Activated B cell treated with CpG ODN at 0.5 μM for 24 hours (primary cell): ENCODE measurements at regions of chr6 and their contacts with region 1.

Region 1: GRCh38 chr6:41683510-41684310 is 45.4 kb downstream of the MDFI start:
- DNase-seq: peak; percentile 78
- ATAC-seq: peak; percentile 82
- H3K4me3 Mint-ChIP-seq: peak overlapping the region; percentile 78
- H3K27ac Mint-ChIP-seq: peak overlapping the region; percentile 83
- H3K4me1 Mint-ChIP-seq: peaks cover 20% of the 10 kb centered on the region
- H3K27me3 Mint-ChIP-seq: no peaks in the 10 kb centered on the region
- CTCF ChIP-seq: peak; percentile 54

Region 2: GRCh38 chr6:39962831-39963230 is 1720.9 kb before region 1 on chr6:
- CTCF ChIA-PET with region 1: no interaction called
- POLR2A ChIA-PET with region 1: no interaction called
- intact Hi-C with region 1: no loop called
- DNase-seq: no peak
- ATAC-seq: no peak
- H3K4me3 Mint-ChIP-seq: no peak overlapping the region
- H3K27ac Mint-ChIP-seq: no peak overlapping the region
- H3K4me1 Mint-ChIP-seq: no peaks in the 10 kb centered on the region
- H3K27me3 Mint-ChIP-seq: peaks cover 8% of the 10 kb centered on the region
- CTCF ChIP-seq: no peak

Region 3: GRCh38 chr6:41008011-41008410 is 675.7 kb before region 1 on chr6:
- CTCF ChIA-PET with region 1: no interaction called
- POLR2A ChIA-PET with region 1: no interaction called
- intact Hi-C with region 1: loop called (anchors 5 kb)
- DNase-seq: no peak
- ATAC-seq: no peak
- H3K4me3 Mint-ChIP-seq: no peak overlapping the region
- H3K27ac Mint-ChIP-seq: no peak overlapping the region
- H3K4me1 Mint-ChIP-seq: no peaks in the 10 kb centered on the region
- H3K27me3 Mint-ChIP-seq: peaks cover 11% of the 10 kb centered on the region
- CTCF ChIP-seq: no peak

Region 4: GRCh38 chr6:41367700-41368099 is 316.0 kb before region 1 on chr6:
- CTCF ChIA-PET with region 1: interaction called, 8 read pairs
- POLR2A ChIA-PET with region 1: no interaction called
- intact Hi-C with region 1: loop called (anchors 1 kb)
- DNase-seq: no peak
- ATAC-seq: no peak
- H3K4me3 Mint-ChIP-seq: no peak overlapping the region
- H3K27ac Mint-ChIP-seq: no peak overlapping the region
- H3K4me1 Mint-ChIP-seq: peaks cover 19% of the 10 kb centered on the region
- H3K27me3 Mint-ChIP-seq: peaks cover 55% of the 10 kb centered on the region
- CTCF ChIP-seq: no peak

Region 5: DNA sequence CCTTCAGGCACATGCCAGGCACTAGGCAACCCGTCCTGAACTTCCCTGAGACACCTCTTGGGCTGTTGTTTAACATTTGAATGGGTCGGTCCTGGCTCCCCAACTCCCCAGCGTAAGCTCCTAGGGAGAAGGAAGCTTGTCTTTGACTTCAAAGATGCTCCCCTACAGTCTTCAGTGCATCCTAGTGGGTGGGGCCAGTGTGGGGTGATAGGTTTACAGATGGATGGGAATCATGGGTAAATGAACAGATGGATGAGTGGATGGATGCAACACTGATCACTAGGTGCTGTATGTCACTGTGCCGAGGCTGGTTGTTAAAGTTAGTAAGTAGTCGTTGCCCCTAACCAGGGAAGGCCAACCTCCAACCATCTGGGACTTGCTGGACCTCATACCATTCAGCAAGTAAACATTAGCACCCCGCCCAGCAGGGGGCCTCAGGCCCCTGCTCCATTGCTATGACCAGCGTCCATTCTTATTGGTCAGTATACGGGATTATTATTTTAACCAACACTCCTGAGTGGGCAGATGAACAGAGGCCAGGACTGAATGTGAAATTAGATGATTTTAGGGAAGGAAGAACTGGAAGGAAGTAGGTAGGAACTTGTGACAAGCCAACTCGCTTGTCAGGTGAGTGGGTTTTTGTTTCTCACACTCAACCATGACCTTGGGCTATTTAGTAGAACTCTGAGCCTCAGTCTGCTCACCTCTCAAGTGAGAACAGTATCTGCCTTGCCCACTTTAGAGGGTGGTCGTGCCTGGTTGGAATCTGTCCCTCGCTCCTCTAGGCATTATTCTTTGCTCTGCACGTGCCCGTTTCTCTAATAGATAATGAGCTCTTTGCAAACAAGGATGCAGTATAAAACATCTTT is 220.4 kb before region 1 on chr6:
- CTCF ChIA-PET with region 1: interaction called, 6 read pairs
- POLR2A ChIA-PET with region 1: no interaction called
- intact Hi-C with region 1: loop called (anchors 1 kb)
- DNase-seq: no peak
- ATAC-seq: peak; percentile 82
- H3K4me3 Mint-ChIP-seq: no peak overlapping the region
- H3K27ac Mint-ChIP-seq: no peak overlapping the region
- H3K4me1 Mint-ChIP-seq: peaks cover 2% of the 10 kb centered on the region
- H3K27me3 Mint-ChIP-seq: peaks cover 31% of the 10 kb centered on the region
- CTCF ChIP-seq: peak; percentile 41

Region 6: DNA sequence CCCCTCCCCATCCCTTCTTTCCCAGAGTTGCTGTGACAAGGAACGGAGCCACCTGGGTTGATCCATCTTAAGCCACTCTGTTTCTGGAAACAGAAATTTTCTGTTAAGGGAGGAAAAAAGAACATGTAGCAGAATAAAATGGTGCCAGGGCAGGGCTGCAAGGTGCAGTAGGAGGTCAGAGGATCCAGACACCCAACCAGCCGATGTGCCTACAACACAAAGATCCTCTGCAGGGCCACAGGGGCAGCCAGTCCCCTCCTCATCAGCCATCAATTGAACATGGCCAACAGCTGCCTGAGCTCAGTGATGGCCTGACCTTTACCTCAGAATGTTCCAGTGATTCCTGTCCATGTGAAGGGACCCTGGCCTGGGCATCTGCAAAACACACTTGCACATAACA is 33.6 kb before region 1 on chr6:
- CTCF ChIA-PET with region 1: no interaction called
- POLR2A ChIA-PET with region 1: interaction called, 10 read pairs
- intact Hi-C with region 1: no loop called
- DNase-seq: no peak
- ATAC-seq: no peak
- H3K4me3 Mint-ChIP-seq: no peak overlapping the region
- H3K27ac Mint-ChIP-seq: no peak overlapping the region
- H3K4me1 Mint-ChIP-seq: no peaks in the 10 kb centered on the region
- H3K27me3 Mint-ChIP-seq: peaks cover 14% of the 10 kb centered on the region
- CTCF ChIP-seq: no peak

Region 7: DNA sequence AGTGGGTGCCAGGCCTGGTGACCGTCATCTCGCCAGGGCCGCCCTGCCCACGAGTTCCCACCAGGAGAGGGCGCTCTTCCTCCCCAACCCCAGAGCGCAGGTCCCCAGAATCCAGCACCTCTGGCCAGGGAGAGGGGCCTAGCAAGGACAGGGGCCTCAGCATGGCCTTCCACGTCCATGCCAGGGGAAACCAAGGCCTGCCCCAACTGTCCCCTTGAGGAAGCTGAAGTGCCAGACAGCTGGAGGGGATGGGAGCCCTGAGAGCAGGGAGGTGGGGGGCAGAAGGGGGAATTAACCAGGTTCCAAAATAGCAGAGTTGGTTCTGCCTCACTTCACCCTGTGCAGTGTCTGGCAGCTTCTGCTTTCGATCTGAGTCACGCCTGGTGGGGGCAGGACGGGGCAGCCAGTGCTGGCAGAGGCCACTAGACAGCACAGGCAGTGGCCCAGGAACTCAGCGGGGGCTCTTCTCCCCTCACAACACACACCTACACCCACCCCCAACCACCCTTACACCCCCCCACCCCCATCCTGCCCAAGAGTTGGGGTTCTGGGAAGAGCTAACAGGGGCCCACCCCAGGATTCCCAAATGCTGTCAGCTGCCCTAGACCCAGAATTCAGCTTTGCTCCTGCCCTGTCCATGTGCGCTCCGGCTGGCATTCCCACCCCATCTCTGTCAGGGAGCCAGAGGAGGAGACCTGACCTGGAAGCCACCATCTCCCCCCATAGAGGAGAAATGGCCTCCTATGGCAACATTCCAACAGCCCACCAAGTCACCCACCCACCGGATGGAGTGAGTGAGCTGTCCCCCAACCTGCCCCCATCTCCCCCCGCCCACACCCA is 22.5 kb after region 1 on chr6:
- CTCF ChIA-PET with region 1: interaction called, 50 read pairs
- POLR2A ChIA-PET with region 1: interaction called, 42 read pairs
- intact Hi-C with region 1: loop called (anchors 1 kb)
- DNase-seq: peak; percentile 83
- ATAC-seq: peak; percentile 81
- H3K4me3 Mint-ChIP-seq: peak overlapping the region; percentile 89
- H3K27ac Mint-ChIP-seq: peak overlapping the region; percentile 97
- H3K4me1 Mint-ChIP-seq: peaks cover 99% of the 10 kb centered on the region
- H3K27me3 Mint-ChIP-seq: no peaks in the 10 kb centered on the region
- CTCF ChIP-seq: peak; percentile 54